ENCODE measurements at regions of chr14 and their contacts with region 1.

Region 1: DNA sequence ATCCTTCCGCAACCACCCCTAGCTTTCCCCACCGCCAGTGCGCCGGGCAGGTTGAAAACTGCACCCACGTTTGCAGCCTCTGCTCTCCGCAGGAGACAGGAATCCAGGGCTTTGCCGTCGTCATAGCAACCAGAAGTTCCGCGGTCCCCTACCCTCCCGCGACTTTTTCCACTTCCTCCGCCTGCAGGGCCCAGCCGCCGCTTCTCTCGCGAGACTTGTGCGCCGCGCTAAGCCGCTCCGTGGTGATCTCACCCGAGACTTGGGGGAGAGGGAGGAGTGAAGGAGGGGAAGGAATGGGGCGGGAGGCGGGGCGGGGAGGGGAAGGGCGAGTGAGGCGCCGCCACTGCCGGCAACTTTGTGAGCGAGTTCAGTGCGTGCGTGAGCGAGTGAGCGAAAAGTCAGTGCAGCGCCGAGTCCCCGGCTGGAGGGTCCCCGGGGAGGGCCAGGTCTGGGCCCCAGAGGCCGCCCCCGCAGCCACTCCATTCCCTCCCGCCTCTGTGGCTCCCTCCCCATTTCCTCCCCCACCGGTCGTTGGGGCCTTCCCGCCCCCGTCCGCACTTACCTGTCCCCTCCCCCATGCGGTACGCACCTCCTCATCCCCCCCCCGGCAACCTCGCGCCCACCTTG is 413.0 kb downstream of the PCNX1 start:
- DNase-seq: peak; percentile 99
- H3K4me3 ChIP-seq: peak within 1 kb of the TSS; percentile 92 to 98 (median 97)
- H3K27ac ChIP-seq: peak within 1 kb of the TSS; percentile 97
- H3K4me1 ChIP-seq: peaks cover 20% of the 10 kb centered on the region
- H3K27me3 ChIP-seq: no peaks in the 10 kb centered on the region
- CTCF ChIP-seq: no peak

Region 2: GRCh38 chr14:71166180-71166790 is 153.9 kb before region 1 on chr14:
- CTCF ChIA-PET with region 1: no interaction called
- dilution Hi-C with region 1: no loop called
- in situ Hi-C with region 1: loop called in 1 of 2 experiments (anchors 25 kb)
- intact Hi-C with region 1: loop called (anchors 1 kb)
- DNase-seq: peak; percentile 77
- H3K4me3 ChIP-seq: no peak overlapping the region
- H3K27ac ChIP-seq: no peak overlapping the region
- H3K4me1 ChIP-seq: peaks cover 8% of the 10 kb centered on the region
- H3K27me3 ChIP-seq: no peaks in the 10 kb centered on the region
- CTCF ChIP-seq: peak; percentile 50 to 76

Region 3: DNA sequence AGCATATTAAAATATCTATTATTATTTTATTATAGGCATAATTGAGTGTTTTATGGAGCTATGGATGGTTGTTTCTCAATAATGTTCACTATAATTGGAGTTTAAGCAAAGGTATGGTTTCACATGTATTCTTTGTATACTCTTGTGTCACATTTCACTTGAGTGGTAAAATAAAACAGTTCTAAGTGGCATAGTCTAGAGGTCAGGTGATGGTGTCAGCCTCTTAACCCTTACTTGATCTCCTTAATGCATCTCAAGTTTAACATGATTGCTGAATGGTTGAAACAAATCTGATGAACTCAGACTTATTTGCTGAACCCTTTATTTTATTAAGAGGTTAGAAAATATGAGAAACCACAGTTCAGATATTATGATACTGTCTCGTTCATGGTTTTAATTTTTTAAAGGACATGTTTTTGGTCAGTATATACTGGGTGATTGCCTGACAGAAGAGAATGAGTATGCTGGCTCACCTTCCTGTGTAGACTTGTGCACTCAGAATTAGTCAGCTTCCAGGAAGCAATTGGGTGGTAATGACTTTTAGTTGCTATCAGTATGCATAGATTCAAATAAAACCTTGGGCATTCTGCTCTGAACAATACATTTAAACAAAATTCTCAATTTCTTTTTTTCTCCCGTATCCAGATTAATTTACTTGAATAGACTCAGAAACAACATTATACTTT is 51.6 kb after region 1 on chr14:
- CTCF ChIA-PET with region 1: interaction called, 10 read pairs
- dilution Hi-C with region 1: no loop called
- in situ Hi-C with region 1: no loop called
- intact Hi-C with region 1: loop called (anchors 2 kb)
- DNase-seq: peak; percentile 84
- H3K4me3 ChIP-seq: peak overlapping the region; percentile 10 to 35 (median 19)
- H3K27ac ChIP-seq: peak overlapping the region; percentile 99
- H3K4me1 ChIP-seq: peaks cover 19% of the 10 kb centered on the region
- H3K27me3 ChIP-seq: no peaks in the 10 kb centered on the region
- CTCF ChIP-seq: no peak

Region 4: DNA sequence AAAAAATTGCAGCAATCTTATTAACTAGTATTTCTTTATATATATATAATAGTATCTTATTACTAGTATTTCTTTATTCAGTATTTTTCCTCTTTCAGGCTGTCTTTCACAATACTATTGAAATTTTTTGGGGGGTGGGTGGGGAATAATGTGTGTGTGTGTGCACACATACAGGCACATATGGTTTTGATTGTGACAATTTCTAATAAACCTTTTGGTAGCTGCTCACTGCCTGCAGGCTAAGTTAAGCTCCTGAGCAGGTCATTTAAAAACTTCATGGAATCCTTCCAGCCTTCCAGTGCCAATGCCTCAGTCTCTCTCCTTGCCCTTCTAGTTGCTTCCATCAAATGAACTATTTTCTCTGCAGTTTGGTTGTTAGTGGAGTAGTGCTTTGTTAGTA is 77.2 kb after region 1 on chr14:
- CTCF ChIA-PET with region 1: no interaction called
- dilution Hi-C with region 1: no loop called
- in situ Hi-C with region 1: no loop called
- intact Hi-C with region 1: no loop called
- DNase-seq: no peak
- H3K4me3 ChIP-seq: no peak overlapping the region
- H3K27ac ChIP-seq: no peak overlapping the region
- H3K4me1 ChIP-seq: peaks cover 13% of the 10 kb centered on the region
- H3K27me3 ChIP-seq: no peaks in the 10 kb centered on the region
- CTCF ChIP-seq: no peak

Region 5: DNA sequence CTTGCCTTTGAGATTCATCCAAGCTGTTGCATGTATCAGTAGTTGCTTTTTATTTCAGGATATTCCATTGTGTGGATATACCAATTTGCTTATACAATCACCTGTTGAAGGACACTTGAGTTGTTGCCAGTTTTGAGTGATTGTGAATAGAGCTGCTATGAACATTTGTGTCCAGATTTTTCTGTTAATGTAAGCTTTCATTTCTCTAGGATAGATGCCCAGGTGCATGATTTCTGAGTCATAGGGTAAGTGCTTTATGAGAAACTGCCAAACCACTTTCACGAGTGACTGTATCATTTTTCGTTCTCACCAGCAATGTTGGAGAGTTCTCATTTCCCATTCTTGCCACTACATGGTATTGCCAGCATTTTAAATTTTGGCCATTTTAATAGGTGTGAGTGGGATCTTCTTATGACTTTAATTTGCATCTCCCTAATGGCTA is 177.4 kb after region 1 on chr14:
- CTCF ChIA-PET with region 1: no interaction called
- dilution Hi-C with region 1: no loop called
- in situ Hi-C with region 1: no loop called
- intact Hi-C with region 1: loop called (anchors 5 kb)
- DNase-seq: peak; percentile 69
- H3K4me3 ChIP-seq: no peak overlapping the region
- H3K27ac ChIP-seq: no peak overlapping the region
- H3K4me1 ChIP-seq: peaks cover 14% of the 10 kb centered on the region
- H3K27me3 ChIP-seq: no peaks in the 10 kb centered on the region
- CTCF ChIP-seq: no peak

Region 6: GRCh38 chr14:71647083-71647784 is 327.0 kb after region 1 on chr14:
- CTCF ChIA-PET with region 1: no interaction called
- dilution Hi-C with region 1: no loop called
- in situ Hi-C with region 1: no loop called
- intact Hi-C with region 1: loop called (anchors 10 kb)
- DNase-seq: peak; percentile 64
- H3K4me3 ChIP-seq: no peak overlapping the region
- H3K27ac ChIP-seq: no peak overlapping the region
- H3K4me1 ChIP-seq: peaks cover 11% of the 10 kb centered on the region
- H3K27me3 ChIP-seq: no peaks in the 10 kb centered on the region
- CTCF ChIP-seq: peak in 1 of 2 donors; percentile 2

Region 7: DNA sequence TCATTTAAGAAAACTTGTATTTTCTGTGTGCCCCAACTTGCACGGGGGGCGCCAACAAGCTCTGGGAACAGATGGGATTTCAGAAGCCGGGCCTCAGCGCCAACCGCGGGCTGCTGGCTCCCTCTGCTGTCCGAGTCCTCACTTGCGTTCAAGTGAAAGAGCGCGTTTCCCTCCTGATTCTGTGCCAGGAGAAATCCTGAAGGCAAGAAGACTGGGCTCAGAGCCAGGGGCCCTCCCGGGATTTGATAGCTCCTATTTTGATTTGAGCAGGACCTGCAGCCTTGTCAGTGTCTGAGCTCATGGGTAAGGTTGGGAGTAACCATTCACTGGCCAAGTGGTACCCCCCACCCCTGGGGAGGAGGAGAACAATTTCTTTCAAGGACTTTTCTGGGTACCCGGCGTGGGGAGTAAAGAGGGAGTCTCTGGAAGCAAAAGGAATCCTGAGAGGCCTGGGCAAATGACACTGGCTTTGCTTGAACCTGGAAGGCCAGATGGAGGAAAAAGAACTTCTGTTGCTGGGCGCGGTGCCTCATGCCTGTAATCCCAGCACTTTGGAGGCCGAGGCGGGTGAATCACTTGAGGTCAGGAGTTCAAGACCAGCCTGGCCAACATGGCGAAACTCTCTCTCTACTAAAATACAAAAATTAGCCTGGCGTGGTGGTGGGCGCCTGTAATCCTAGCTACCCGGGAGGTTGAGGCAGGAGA is 433.1 kb after region 1 on chr14:
- CTCF ChIA-PET with region 1: no interaction called
- dilution Hi-C with region 1: no loop called
- in situ Hi-C with region 1: no loop called
- intact Hi-C with region 1: loop called (anchors 1 kb)
- DNase-seq: peak; percentile 68
- H3K4me3 ChIP-seq: no peak overlapping the region
- H3K27ac ChIP-seq: no peak overlapping the region
- H3K4me1 ChIP-seq: peaks cover 11% of the 10 kb centered on the region
- H3K27me3 ChIP-seq: no peaks in the 10 kb centered on the region
- CTCF ChIP-seq: peak; percentile 82 to 96

Measured in mammary epithelial cell (primary cell).